Esophagus muscularis mucosa (tissue), 4 donors: ENCODE measurements at regions of chr2 and their contacts with region 1.

Region 1: GRCh38 chr2:46915811-46916630 is 415 bp upstream of the MCFD2 start:
- DNase-seq: peak; percentile 95
- H3K4me3 ChIP-seq: peak overlapping the region; percentile 90 to 100 (median 99)
- H3K27ac ChIP-seq: peak overlapping the region; percentile 95 to 99 (median 97)
- H3K4me1 ChIP-seq: peaks cover 32 to 47% (median 42%) of the 10 kb centered on the region in 4 donors
- H3K27me3 ChIP-seq: no peaks in the 10 kb centered on the region
- CTCF ChIP-seq: no peak
- EP300 ChIP-seq: no peak
- POLR2A ChIP-seq: no peak

Region 2: GRCh38 chr2:46780801-46781445 is 135.1 kb before region 1 on chr2:
- intact Hi-C with region 1: no loop called
- DNase-seq: no peak
- H3K4me3 ChIP-seq: no peak overlapping the region
- H3K27ac ChIP-seq: peak overlapping the region; percentile 82 to 93 (median 87)
- H3K4me1 ChIP-seq: peaks cover 36 to 58% (median 48%) of the 10 kb centered on the region in 4 donors
- H3K27me3 ChIP-seq: no peaks in the 10 kb centered on the region
- CTCF ChIP-seq: peak in 2 of 3 experiments; percentile 22 to 24
- EP300 ChIP-seq: no peak
- POLR2A ChIP-seq: no peak

Region 3: DNA sequence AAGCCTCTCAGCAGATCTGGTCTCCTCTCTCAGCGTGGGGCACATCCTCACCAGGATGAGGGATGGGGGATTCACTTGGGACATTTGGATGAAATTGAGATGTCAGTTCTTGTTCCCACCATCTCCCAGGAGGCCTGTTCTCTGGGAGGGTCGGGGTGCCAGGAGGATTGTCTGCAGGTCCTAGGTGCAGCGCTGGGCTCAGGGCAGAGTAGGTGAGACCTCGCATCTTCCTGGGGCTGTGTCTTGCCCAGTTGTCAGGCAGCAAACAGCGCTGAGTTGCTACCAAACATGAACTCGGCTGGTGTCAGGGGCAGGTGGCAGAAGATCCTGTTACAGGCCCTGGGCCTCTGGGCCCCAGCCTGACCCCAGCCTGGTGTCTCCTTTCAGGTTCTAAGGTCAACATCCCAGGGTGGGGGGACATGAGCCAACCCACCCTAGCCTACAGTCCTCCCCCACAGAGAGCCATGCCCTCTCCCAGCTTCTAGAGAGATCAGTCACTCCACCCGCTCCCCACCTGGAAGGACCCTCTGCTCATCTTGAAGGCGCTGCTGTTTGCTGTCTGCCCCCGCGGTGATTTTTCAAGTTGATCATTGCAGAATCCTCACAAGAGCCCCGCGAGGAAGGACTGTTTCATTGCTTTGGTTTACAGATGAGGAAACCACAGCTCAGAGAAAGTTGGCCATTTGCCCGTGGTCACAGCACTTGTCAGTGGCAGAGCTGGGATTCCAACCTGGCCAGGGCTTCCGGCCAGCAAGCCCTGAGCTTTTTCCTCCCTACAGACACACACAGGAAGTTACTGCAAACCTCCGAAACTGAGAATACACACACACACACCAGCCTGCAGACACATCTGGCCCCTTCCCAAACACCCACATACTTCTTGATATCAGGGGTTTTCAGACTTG is 155.2 kb after region 1 on chr2:
- intact Hi-C with region 1: loop called (anchors 10 kb)
- DNase-seq: peak; percentile 95
- H3K4me3 ChIP-seq: no peak overlapping the region
- H3K27ac ChIP-seq: peak overlapping the region; percentile 87 to 91 (median 90)
- H3K4me1 ChIP-seq: peaks cover 83 to 96% (median 94%) of the 10 kb centered on the region in 4 donors
- H3K27me3 ChIP-seq: no peaks in the 10 kb centered on the region
- CTCF ChIP-seq: no peak
- EP300 ChIP-seq: no peak
- POLR2A ChIP-seq: no peak

Region 4: GRCh38 chr2:47323009-47323821 is 407.2 kb after region 1 on chr2:
- intact Hi-C with region 1: loop called (anchors 5 kb)
- DNase-seq: peak; percentile 94
- H3K4me3 ChIP-seq: no peak overlapping the region
- H3K27ac ChIP-seq: peak overlapping the region in 1 of 4 donors; percentile 21
- H3K4me1 ChIP-seq: peaks cover 4 to 20% (median 10%) of the 10 kb centered on the region in 4 donors
- H3K27me3 ChIP-seq: no peaks in the 10 kb centered on the region
- CTCF ChIP-seq: peak; percentile 98 to 99 (median 98)
- EP300 ChIP-seq: no peak
- POLR2A ChIP-seq: no peak